ENCODE measurements at regions of chr9 and their contacts with region 1.

Region 1: DNA sequence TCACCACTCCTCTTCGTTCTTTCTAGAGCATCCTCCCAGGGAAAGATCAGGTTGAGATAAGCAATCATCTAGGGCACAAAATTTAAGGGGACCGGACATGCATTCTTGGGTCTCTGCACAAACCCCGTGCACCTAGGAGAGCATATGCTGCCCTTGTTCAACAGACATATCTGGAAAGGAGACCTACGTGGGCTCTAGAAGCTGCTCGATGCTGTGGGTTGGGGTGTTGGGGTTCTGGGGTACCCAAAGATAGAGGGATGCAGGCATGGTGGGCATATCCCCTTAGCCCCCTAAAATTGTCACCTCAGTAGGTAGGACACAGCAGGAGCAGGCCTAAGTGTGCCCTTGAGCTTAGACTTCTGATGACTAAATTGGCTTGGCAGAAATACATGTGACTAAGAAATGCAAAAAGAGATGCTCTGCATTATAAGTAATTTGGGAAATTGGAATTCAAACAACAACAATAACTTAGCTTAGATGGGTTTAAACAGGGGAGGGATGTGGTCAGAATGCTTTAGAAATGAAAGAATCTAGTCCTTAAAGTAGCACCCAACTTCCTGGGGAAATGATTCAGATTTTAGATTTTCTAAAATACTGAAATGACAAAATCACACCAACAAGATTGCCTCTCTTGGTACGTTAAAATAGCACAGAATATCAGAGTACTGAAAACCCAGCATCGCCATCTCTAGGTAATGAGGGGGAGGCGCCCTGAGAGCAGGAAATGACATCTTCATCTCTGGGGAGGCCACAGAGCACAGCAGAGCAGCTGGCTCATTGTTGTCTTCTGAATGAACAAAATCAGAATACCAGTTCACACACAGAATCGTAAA is 172.3 kb downstream of the GNA14 start:
- DNase-seq: peak; percentile 85
- H3K4me3 Mint-ChIP-seq: no peak overlapping the region
- H3K27ac Mint-ChIP-seq: peak overlapping the region; percentile 91
- H3K4me1 Mint-ChIP-seq: peaks cover 30% of the 10 kb centered on the region
- H3K27me3 Mint-ChIP-seq: no peaks in the 10 kb centered on the region

Region 2: DNA sequence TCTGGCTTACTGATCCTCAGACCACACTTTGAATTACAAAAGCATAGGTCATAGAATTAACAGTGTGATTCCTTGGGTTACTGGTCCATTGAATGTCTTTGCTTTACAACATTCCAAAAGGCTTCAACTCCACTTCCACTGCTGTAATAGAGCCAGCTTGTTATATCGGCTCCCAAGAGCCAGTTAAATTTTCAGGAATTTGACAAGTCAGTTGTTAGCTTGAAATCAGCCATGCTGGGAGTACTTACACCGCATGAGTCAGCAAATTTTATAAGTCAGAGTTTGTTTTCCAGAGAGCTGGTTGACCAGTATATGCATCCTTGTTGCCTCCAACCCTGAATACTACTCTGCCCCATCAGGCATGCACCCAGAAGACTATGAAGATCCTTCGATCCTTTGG is 383.3 kb before region 1 on chr9:
- CTCF ChIA-PET with region 1: no interaction called
- POLR2A ChIA-PET with region 1: no interaction called
- intact Hi-C with region 1: no loop called
- DNase-seq: no peak
- H3K4me3 Mint-ChIP-seq: no peak overlapping the region
- H3K27ac Mint-ChIP-seq: no peak overlapping the region
- H3K4me1 Mint-ChIP-seq: no peaks in the 10 kb centered on the region
- H3K27me3 Mint-ChIP-seq: peaks cover 4% of the 10 kb centered on the region

Region 3: GRCh38 chr9:77488439-77489126 is 12.7 kb after region 1 on chr9:
- CTCF ChIA-PET with region 1: interaction called, 17 read pairs
- POLR2A ChIA-PET with region 1: interaction called, 4 read pairs
- intact Hi-C with region 1: loop called (anchors 1 kb)
- DNase-seq: no peak
- H3K4me3 Mint-ChIP-seq: no peak overlapping the region
- H3K27ac Mint-ChIP-seq: no peak overlapping the region
- H3K4me1 Mint-ChIP-seq: peaks cover 17% of the 10 kb centered on the region
- H3K27me3 Mint-ChIP-seq: peaks cover 21% of the 10 kb centered on the region

Region 4: GRCh38 chr9:77562019-77562748 is 86.3 kb after region 1 on chr9:
- CTCF ChIA-PET with region 1: no interaction called
- POLR2A ChIA-PET with region 1: no interaction called
- intact Hi-C with region 1: no loop called
- DNase-seq: no peak
- H3K4me3 Mint-ChIP-seq: no peak overlapping the region
- H3K27ac Mint-ChIP-seq: no peak overlapping the region
- H3K4me1 Mint-ChIP-seq: peaks cover 6% of the 10 kb centered on the region
- H3K27me3 Mint-ChIP-seq: peaks cover 2% of the 10 kb centered on the region

Region 5: DNA sequence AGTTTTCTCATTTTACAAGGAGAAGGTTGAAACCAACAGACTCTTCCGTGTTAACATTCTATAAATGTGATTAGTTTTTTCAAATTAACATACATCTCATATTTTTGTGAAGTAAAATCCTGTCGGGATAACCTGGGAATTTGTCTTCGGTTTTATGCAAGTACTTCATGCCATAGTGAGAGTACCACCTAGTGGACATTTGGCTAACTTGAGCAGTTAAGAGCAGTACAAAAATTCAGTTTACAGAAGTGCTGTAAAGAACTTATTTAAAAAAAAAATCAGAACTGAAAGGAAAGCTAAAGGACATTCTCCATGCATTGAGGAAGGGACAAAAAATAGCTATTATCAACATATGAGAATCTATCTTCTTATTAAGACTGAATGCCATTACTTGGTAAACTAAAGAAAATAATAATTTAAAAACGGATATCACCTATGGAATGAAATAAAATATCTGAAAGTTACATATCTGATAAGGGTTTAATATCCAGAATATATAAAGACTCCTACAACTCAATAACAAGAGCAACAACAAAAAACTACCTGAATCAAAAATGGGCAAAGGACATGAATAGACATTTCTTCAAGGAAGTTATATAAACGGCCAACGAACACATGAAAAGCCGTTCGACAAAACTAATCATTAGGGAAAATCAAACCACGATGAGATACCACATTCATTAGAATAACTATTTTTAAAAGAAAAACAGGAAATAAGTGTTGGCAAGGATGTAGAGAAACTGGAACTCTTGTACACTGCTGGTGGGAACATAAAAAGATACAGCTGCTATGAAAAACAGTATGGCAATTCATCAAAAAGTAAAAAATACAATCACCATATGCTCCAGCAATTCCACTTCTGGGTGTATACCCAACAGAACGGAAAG is 289.3 kb after region 1 on chr9:
- CTCF ChIA-PET with region 1: no interaction called
- POLR2A ChIA-PET with region 1: no interaction called
- intact Hi-C with region 1: loop called (anchors 5 kb)
- DNase-seq: no peak
- H3K4me3 Mint-ChIP-seq: no peak overlapping the region
- H3K27ac Mint-ChIP-seq: no peak overlapping the region
- H3K4me1 Mint-ChIP-seq: peaks cover 13% of the 10 kb centered on the region
- H3K27me3 Mint-ChIP-seq: no peaks in the 10 kb centered on the region

Region 6: GRCh38 chr9:77977210-77977611 is 501.4 kb after region 1 on chr9:
- CTCF ChIA-PET with region 1: no interaction called
- POLR2A ChIA-PET with region 1: no interaction called
- intact Hi-C with region 1: loop called (anchors 1 kb)
- DNase-seq: peak; percentile 72
- H3K4me3 Mint-ChIP-seq: no peak overlapping the region
- H3K27ac Mint-ChIP-seq: peak overlapping the region; percentile 31
- H3K4me1 Mint-ChIP-seq: peaks cover 51% of the 10 kb centered on the region
- H3K27me3 Mint-ChIP-seq: no peaks in the 10 kb centered on the region

Region 7: DNA sequence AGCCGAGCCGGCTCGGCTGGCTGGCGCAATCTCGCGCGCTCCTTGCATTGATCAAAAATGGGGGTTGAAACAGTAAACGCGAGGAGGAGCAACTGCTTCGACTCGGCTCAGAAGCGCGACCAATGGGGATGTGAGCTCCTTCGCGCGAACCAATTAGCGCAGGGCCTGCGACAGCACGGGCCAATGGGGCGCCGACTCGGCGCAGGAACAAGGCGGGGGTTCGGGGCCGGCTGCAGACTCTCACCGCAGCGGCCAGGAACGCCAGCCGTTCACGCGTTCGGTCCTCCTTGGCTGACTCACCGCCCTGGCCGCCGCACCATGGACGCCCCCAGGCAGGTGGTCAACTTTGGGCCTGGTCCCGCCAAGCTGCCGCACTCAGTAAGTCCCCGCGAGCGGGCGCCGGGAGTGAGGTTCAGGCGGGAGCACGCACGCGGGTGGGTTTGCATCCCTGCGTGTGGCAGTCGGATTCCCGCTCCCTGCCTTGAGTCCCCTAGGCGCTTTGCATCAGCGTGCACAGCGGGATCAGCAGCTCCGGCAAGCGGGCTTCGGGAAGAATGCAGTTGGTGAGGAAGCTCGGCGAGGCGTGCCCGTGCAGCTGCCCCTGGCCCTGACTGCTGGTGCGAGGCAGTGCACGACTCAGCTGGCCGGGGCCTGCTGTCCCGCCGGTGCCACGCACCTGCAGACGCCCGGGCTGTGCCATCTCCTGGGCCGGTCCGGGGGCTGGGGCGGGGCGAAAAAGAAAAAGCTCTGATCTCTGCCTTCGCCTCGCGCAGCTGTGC is 821.2 kb after region 1 on chr9 and contains the start of gene PSAT1:
- CTCF ChIA-PET with region 1: no interaction called
- POLR2A ChIA-PET with region 1: no interaction called
- intact Hi-C with region 1: loop called (anchors 5 kb)
- DNase-seq: peak; percentile 96
- H3K4me3 Mint-ChIP-seq: peak within 1 kb of the TSS; percentile 89
- H3K27ac Mint-ChIP-seq: peak within 1 kb of the TSS; percentile 87
- H3K4me1 Mint-ChIP-seq: peaks cover 44% of the 10 kb centered on the region
- H3K27me3 Mint-ChIP-seq: no peaks in the 10 kb centered on the region
- total RNA-seq, gene PSAT1: 132 to 137 TPM